ENCODE measurements at regions of chr16 and their contacts with region 1.

Region 1: GRCh38 chr16:23930791-23931190 is 95.0 kb downstream of the PRKCB start:
- DNase-seq: no peak
- ATAC-seq: no peak
- H3K4me3 ChIP-seq: no peak overlapping the region
- H3K27ac ChIP-seq: no peak overlapping the region
- H3K4me1 ChIP-seq: no peaks in the 10 kb centered on the region
- H3K27me3 ChIP-seq: peaks cover 0 to 5% (median 0%) of the 10 kb centered on the region in 7 donors
- CTCF ChIP-seq: no peak

Region 2: DNA sequence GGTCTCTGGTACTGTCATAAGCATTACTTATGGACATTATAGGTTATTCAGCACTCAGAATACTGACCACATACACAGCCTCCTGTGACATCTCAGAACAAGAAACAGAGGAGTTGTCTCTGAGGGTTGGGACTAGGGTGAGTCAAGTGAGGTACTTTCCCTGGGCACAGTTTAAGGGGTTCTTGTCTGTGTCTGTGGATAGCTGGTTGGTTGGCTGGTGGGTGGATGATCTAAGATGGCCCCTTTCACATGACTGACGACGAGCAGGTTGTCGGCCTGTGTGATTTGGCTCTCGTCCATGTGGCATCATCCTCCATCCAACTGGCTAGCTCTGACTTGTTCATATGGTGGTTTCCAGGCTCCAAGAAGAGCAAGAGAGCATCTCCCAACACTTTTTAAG is 68.9 kb after region 1 on chr16:
- intact Hi-C with region 1: loop called in 1 of 10 experiments (anchors 10 kb)
- DNase-seq: no peak
- ATAC-seq: no peak
- H3K4me3 ChIP-seq: no peak overlapping the region
- H3K27ac ChIP-seq: no peak overlapping the region
- H3K4me1 ChIP-seq: no peaks in the 10 kb centered on the region
- H3K27me3 ChIP-seq: peaks cover 0 to 14% (median 3%) of the 10 kb centered on the region in 7 donors
- CTCF ChIP-seq: no peak